Dendritic cell treated with granulocyte-macrophage colony-stimulating factor and Interleukin-4, amounts not matched to agents 40 ng/mL and 50 ng/mL, for 4 days (primary cell): ENCODE measurements at regions of chr14 and their contacts with region 1.

Region 1: DNA sequence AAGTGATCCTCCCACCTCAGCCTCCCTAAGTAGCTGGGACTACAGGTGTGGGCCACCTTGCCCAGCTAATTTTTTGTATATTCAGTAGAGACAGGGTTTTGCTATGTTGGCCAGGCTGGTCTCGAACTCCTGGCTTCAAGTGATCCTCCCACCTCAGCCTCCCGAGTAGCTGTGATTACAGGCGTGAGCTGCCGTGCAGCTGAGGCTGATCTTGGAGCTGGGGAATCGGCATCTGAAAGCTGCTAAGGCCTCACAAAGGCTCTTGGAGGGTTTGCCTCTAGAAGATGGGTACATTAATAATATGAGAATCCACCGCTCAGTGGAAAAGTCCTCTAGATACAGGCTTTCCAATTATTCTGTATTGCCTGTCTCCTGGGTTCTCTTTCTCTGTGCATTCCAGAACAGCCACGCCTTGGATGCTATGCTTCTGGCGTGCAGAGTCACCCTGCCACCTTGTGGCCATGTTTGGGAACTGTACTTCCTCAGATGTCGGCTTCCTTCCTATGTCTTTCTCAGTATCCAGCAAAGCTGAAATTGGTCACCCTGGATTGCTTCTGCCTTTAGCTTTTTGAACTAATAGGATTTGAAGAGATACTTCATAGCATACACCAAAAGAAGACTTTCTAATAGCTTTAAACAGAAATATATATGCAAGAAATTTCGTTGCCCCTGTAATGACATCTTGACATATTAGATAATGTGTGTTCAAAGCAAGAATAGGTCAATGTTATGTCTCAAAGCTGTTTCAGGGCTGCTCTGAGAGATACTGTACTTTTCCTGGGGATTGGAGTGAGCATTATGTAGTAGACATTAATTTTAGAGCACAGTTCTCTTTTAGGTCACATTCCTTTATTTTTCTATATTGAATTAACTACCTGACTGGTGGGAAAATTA is 75.4 kb downstream of the SNAPC1 start:
- H3K4me3 Mint-ChIP-seq: no peak overlapping the region
- H3K27ac Mint-ChIP-seq: no peak overlapping the region
- H3K4me1 Mint-ChIP-seq: no peaks in the 10 kb centered on the region
- H3K27me3 Mint-ChIP-seq: peaks cover 14% of the 10 kb centered on the region

Region 2: GRCh38 chr14:61090432-61091216 is 747.0 kb before region 1 on chr14:
- intact Hi-C with region 1: no loop called
- H3K4me3 Mint-ChIP-seq: no peak overlapping the region
- H3K27ac Mint-ChIP-seq: peak overlapping the region; percentile 4
- H3K4me1 Mint-ChIP-seq: peaks cover 30% of the 10 kb centered on the region
- H3K27me3 Mint-ChIP-seq: no peaks in the 10 kb centered on the region

Region 3: DNA sequence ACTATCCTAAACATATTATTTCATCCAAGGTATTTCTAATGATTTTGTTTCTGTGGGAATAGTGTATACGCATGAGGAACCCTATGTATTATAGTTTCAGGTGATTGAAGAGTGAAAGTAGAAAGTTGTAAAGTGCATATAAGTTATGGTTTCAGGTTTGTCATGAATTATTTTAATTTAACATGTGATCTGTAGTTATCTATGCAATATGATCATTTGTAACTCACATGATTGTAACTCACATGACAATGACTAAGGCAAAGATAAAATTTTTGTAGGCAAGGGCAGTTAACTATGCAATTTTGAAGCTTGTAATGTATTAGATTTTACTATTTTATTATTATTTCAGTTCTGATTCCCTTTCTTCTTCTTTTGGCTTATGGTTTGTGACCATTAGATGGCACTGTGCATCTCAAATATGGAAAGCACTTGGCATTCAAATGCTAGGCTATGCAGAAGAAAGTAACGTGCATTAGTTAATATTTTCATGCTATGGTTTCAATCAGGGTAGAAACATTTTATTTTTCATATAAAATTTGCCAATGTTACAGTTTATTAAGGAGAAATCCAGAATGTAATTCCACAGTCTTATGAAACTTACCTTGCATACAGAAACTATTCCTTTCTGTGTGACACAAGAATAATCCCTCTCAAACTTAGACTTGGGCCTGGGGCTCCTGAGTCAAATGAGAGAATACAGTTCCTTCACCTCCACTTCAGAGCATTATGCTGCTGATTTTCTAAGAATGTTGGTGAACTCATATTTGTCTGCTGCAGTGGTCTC is 540.7 kb before region 1 on chr14:
- intact Hi-C with region 1: loop called (anchors 1 kb)
- H3K4me3 Mint-ChIP-seq: no peak overlapping the region
- H3K27ac Mint-ChIP-seq: no peak overlapping the region
- H3K4me1 Mint-ChIP-seq: no peaks in the 10 kb centered on the region
- H3K27me3 Mint-ChIP-seq: no peaks in the 10 kb centered on the region

Region 4: DNA sequence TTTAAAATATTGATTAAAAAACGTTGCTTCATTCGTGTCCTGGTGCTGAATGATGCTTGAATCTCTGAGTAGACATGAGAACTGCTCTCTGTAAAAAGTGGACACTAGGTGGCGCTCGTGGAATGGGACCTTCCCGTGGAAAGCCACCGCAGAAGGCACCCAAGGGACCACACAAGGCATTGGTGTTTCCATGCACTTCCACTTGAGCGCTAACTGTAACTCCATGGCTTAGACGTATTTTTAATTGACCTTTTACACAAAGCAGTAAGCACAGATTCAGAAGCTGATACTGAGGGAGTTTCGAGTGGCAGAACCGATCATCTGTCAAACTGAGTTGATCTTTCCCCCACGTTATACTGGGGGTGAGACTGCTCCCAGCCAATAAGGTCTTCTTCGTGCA is 380.9 kb before region 1 on chr14:
- intact Hi-C with region 1: loop called (anchors 1 kb)
- H3K4me3 Mint-ChIP-seq: no peak overlapping the region
- H3K27ac Mint-ChIP-seq: no peak overlapping the region
- H3K4me1 Mint-ChIP-seq: no peaks in the 10 kb centered on the region
- H3K27me3 Mint-ChIP-seq: no peaks in the 10 kb centered on the region

Region 5: DNA sequence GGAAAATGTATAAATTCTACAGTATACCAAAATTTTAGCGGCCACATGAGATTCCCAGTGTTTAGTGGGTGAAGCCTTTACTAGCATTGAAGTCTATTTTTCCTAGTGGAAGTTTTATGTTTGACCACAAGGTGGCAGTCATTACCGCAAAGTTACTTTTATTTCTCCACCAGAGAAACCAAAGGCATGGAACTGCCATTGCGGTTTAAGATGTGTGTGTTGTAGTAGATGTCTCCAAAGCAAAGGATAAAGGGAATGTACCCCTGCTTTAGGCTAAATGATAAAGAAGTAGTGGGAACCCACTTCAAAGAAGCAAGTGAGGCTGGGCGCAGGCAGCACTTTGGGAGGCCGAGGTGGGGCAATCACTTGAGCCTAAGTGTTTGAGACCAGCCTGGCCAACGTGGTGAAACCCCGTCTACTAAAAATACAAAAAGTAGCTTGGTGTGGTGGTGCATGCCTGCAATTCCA is 375.7 kb before region 1 on chr14:
- intact Hi-C with region 1: loop called (anchors 1 kb)
- H3K4me3 Mint-ChIP-seq: no peak overlapping the region
- H3K27ac Mint-ChIP-seq: no peak overlapping the region
- H3K4me1 Mint-ChIP-seq: peaks cover under 1% of the 10 kb centered on the region
- H3K27me3 Mint-ChIP-seq: no peaks in the 10 kb centered on the region

Region 6: GRCh38 chr14:61710853-61711817 is 126.4 kb before region 1 on chr14:
- intact Hi-C with region 1: loop called (anchors 10 kb)
- H3K4me3 Mint-ChIP-seq: no peak overlapping the region
- H3K27ac Mint-ChIP-seq: no peak overlapping the region
- H3K4me1 Mint-ChIP-seq: peaks cover 54% of the 10 kb centered on the region
- H3K27me3 Mint-ChIP-seq: no peaks in the 10 kb centered on the region

Region 7: GRCh38 chr14:61797309-61797708 is 40.3 kb before region 1 on chr14:
- intact Hi-C with region 1: no loop called
- H3K4me3 Mint-ChIP-seq: no peak overlapping the region
- H3K27ac Mint-ChIP-seq: no peak overlapping the region
- H3K4me1 Mint-ChIP-seq: no peaks in the 10 kb centered on the region
- H3K27me3 Mint-ChIP-seq: no peaks in the 10 kb centered on the region